Lower leg skin (tissue), 4 donors: ENCODE measurements at regions of chr4 and their contacts with region 1.

Region 1: DNA sequence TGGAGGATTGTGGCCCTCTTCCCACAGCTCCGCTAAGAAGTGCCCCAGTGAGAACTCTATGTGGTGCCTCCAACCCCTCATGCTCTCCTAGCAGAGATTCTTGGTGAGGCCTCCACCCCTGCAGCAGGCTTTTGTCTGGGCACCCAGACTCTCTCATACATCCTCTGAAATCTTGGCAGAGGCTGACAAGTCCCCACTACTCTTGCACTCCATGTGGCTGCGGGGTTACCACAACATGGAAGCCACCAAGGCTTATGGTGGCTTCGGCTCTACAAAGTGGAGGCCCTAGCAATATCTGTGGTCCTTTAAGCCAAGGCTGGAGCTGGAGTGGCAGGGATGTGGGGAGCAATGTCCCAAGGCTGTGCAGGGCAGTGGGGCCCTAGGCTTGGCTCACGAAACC is 255.2 kb downstream of the COX7B2 start:
- DNase-seq: no peak
- H3K4me3 ChIP-seq: no peak overlapping the region
- CTCF ChIP-seq: no peak
- POLR2A ChIP-seq: no peak

Region 2: GRCh38 chr4:47577779-47578553 is 924.1 kb after region 1 on chr4:
- intact Hi-C with region 1: loop called (anchors 5 kb)
- DNase-seq: no peak
- H3K4me3 ChIP-seq: no peak overlapping the region
- CTCF ChIP-seq: no peak
- POLR2A ChIP-seq: no peak